GM12878 (cell line): ENCODE measurements at regions of chr14 and their contacts with region 1.

Region 1: GRCh38 chr14:33564774-33565630 is 385.9 kb downstream of the EGLN3 start:
- DNase-seq: peak; percentile 57
- ATAC-seq: peak; percentile 92
- H3K4me3 ChIP-seq: no peak overlapping the region
- H3K27ac ChIP-seq: no peak overlapping the region
- H3K4me1 ChIP-seq: no peaks in the 10 kb centered on the region
- H3K27me3 ChIP-seq: peaks cover 0 to 3% of the 10 kb centered on the region in 2 experiments; a peak in 1 of 4 replicates
- CTCF ChIP-seq: no peak
- EP300 ChIP-seq: peak in 1 of 2 experiments; percentile 70; a peak in 1 of 4 replicates
- POLR2A ChIP-seq: no peak
- RAD21 ChIP-seq: no peak

Region 2: DNA sequence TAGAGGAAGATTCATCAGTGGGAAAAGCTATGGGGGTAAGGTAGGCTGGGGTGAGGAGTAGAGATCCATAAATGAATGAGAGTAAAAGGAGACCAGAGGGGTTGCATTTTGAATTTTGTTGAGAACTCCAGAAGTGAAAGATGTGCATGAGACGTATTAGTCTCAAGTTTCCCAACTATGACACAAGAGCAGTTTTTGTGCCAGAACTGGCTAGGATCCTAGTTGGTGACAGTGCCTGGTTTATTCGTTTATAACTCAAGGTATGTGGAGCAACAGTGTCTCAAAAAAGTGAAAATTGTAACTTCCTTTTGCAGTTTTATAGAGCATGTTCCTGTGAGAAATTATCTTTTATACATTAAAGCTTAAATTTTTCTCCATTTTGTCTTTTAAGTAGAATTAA is 249.3 kb before region 1 on chr14:
- CTCF ChIA-PET with region 1: no interaction called
- POLR2A ChIA-PET with region 1: no interaction called
- RAD21 ChIA-PET with region 1: no interaction called
- SMC1A ChIA-PET with region 1: no interaction called
- in situ Hi-C with region 1: no loop called
- intact Hi-C with region 1: no loop called
- DNase-seq: no peak
- ATAC-seq: no peak
- H3K4me3 ChIP-seq: no peak overlapping the region
- H3K27ac ChIP-seq: no peak overlapping the region
- H3K4me1 ChIP-seq: no peaks in the 10 kb centered on the region
- H3K27me3 ChIP-seq: no peaks in the 10 kb centered on the region
- CTCF ChIP-seq: no peak
- EP300 ChIP-seq: no peak
- POLR2A ChIP-seq: no peak
- RAD21 ChIP-seq: no peak

Region 3: DNA sequence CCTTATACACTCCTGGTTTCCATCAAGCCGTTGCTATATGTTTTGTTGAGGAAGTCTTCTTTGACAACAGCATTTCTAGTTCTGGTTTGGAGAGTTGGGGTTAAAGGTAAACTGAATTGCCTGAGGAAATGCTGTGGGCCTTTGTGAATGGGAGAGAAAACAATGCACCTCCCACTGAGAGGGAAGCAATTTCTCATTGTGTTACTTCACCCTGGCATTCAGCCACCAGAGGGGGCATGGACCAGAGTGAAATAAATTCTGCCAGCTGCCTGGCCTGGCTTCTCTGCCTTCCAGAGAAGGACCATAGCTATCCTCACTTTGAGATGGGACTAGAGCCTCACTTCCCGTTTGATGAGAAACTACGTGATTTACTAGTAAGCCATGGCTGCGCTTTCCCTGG is 89.4 kb before region 1 on chr14:
- CTCF ChIA-PET with region 1: interaction called, 6 read pairs
- POLR2A ChIA-PET with region 1: no interaction called
- RAD21 ChIA-PET with region 1: interaction called, 14 read pairs
- SMC1A ChIA-PET with region 1: interaction called, 13 read pairs
- in situ Hi-C with region 1: no loop called
- intact Hi-C with region 1: no loop called
- DNase-seq: no peak
- ATAC-seq: peak; percentile 77
- H3K4me3 ChIP-seq: no peak overlapping the region
- H3K27ac ChIP-seq: no peak overlapping the region
- H3K4me1 ChIP-seq: no peaks in the 10 kb centered on the region
- H3K27me3 ChIP-seq: no peaks in the 10 kb centered on the region
- CTCF ChIP-seq: peak; percentile 40 to 56 (median 46); a peak in 5 of 6 replicates
- EP300 ChIP-seq: no peak
- POLR2A ChIP-seq: no peak
- RAD21 ChIP-seq: peak; percentile 35; the same call in 1 of the 2 replicates

Region 4: GRCh38 chr14:33534632-33535031 is 30.4 kb before region 1 on chr14:
- CTCF ChIA-PET with region 1: interaction called, 36 read pairs
- POLR2A ChIA-PET with region 1: interaction called, 105 read pairs
- RAD21 ChIA-PET with region 1: interaction called, 279 read pairs
- SMC1A ChIA-PET with region 1: interaction called, 271 read pairs
- in situ Hi-C with region 1: no loop called
- intact Hi-C with region 1: no loop called
- DNase-seq: no peak
- ATAC-seq: no peak
- H3K4me3 ChIP-seq: no peak overlapping the region
- H3K27ac ChIP-seq: no peak overlapping the region
- H3K4me1 ChIP-seq: no peaks in the 10 kb centered on the region
- H3K27me3 ChIP-seq: no peaks in the 10 kb centered on the region
- CTCF ChIP-seq: no peak
- EP300 ChIP-seq: no peak
- POLR2A ChIP-seq: no peak
- RAD21 ChIP-seq: no peak

Region 5: GRCh38 chr14:33596211-33597080 is 31.4 kb after region 1 on chr14:
- CTCF ChIA-PET with region 1: interaction called, 10 read pairs
- POLR2A ChIA-PET with region 1: interaction called, 3 read pairs
- RAD21 ChIA-PET with region 1: interaction called, 5 read pairs
- SMC1A ChIA-PET with region 1: interaction called, 6 read pairs
- in situ Hi-C with region 1: no loop called
- intact Hi-C with region 1: no loop called
- DNase-seq: no peak
- ATAC-seq: no peak
- H3K4me3 ChIP-seq: no peak overlapping the region
- H3K27ac ChIP-seq: no peak overlapping the region
- H3K4me1 ChIP-seq: no peaks in the 10 kb centered on the region
- H3K27me3 ChIP-seq: no peaks in the 10 kb centered on the region; a peak in 1 of 4 replicates
- CTCF ChIP-seq: no peak
- EP300 ChIP-seq: no peak
- POLR2A ChIP-seq: no peak
- RAD21 ChIP-seq: no peak

Region 6: DNA sequence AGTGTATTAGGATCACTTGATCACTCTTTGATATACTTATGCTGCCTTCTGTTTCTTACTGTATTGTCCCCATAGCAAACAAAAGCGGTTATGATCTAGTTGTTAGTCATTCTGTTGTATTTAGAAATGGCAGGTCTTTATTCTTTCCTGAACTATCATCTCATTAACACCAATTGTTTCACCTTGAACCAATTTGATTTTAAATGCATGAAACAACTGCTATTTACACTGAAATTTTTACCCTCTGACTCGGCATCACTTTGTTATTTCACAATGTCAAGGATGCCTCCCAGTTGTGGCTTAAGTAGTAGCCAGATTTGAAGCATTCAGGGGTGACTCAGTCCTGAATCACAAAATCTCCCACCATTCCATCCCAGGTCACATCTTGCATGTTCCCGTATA is 82.4 kb after region 1 on chr14:
- CTCF ChIA-PET with region 1: interaction called, 6 read pairs
- POLR2A ChIA-PET with region 1: interaction called, 3 read pairs
- RAD21 ChIA-PET with region 1: interaction called, 17 read pairs
- SMC1A ChIA-PET with region 1: interaction called, 12 read pairs
- in situ Hi-C with region 1: no loop called
- intact Hi-C with region 1: no loop called
- DNase-seq: no peak
- ATAC-seq: no peak
- H3K4me3 ChIP-seq: no peak overlapping the region
- H3K27ac ChIP-seq: no peak overlapping the region
- H3K4me1 ChIP-seq: no peaks in the 10 kb centered on the region
- H3K27me3 ChIP-seq: no peaks in the 10 kb centered on the region
- CTCF ChIP-seq: no peak
- EP300 ChIP-seq: no peak
- POLR2A ChIP-seq: no peak
- RAD21 ChIP-seq: no peak

Region 7: GRCh38 chr14:33668066-33668465 is 103.1 kb after region 1 on chr14:
- CTCF ChIA-PET with region 1: interaction called, 24 read pairs
- POLR2A ChIA-PET with region 1: interaction called, 3 read pairs
- RAD21 ChIA-PET with region 1: interaction called, 18 read pairs
- SMC1A ChIA-PET with region 1: interaction called, 4 read pairs
- in situ Hi-C with region 1: no loop called
- intact Hi-C with region 1: no loop called
- DNase-seq: no peak
- ATAC-seq: no peak
- H3K4me3 ChIP-seq: no peak overlapping the region
- H3K27ac ChIP-seq: no peak overlapping the region
- H3K4me1 ChIP-seq: no peaks in the 10 kb centered on the region
- H3K27me3 ChIP-seq: no peaks in the 10 kb centered on the region
- CTCF ChIP-seq: no peak
- EP300 ChIP-seq: no peak
- POLR2A ChIP-seq: no peak
- RAD21 ChIP-seq: no peak